Activated B cell treated with CpG ODN at 0.5 μM for 24 hours (primary cell): ENCODE measurements at regions of chr6 and their contacts with region 1.

Region 1: DNA sequence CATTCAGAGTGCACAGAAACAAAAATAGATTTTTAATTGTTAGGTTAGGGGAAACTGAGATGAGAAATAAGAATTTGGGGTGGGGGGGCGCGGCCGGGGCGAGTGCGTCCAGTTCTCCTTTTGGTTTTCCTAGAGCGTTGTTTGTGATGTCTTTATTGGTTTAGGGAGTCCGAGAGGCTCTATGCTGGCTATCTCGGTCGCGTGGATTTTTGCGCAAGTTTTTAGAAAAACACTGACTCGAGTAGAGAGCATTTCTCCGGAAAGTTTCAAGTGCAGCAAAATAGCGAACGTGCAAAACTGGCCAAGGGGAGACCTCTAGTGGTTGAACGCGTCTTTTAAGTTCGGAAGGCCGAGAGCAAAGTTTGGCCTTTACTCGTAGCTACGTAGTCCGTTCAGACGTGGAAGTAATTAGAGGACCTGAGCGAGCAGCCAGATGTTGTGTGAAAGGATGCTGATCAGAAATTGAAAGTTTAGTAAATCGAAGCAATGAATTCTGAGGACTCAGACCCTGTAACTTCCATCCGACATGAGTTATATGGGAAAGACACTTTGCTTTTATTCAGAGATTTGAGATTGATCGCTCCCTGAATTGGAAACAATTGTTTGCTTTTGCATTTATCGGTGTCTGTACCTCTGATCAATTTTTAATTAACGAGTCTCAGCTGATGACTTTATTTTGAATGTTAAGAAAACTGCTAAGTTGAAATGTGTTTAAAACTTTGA is 2.7 kb downstream of the L3MBTL3 start:
- DNase-seq: peak; percentile 50
- ATAC-seq: peak; percentile 58
- H3K4me3 Mint-ChIP-seq: peak overlapping the region; percentile 97
- H3K27ac Mint-ChIP-seq: peak overlapping the region; percentile 96
- H3K4me1 Mint-ChIP-seq: peaks cover 25% of the 10 kb centered on the region
- H3K27me3 Mint-ChIP-seq: no peaks in the 10 kb centered on the region
- CTCF ChIP-seq: peak; percentile 29

Region 2: GRCh38 chr6:129490521-129491245 is 530.4 kb before region 1 on chr6:
- CTCF ChIA-PET with region 1: no interaction called
- POLR2A ChIA-PET with region 1: interaction called, 3 read pairs
- intact Hi-C with region 1: loop called (anchors 1 kb)
- DNase-seq: no peak
- ATAC-seq: peak; percentile 88
- H3K4me3 Mint-ChIP-seq: peak overlapping the region; percentile 82
- H3K27ac Mint-ChIP-seq: peak overlapping the region; percentile 97
- H3K4me1 Mint-ChIP-seq: peaks cover 28% of the 10 kb centered on the region
- H3K27me3 Mint-ChIP-seq: no peaks in the 10 kb centered on the region
- CTCF ChIP-seq: no peak

Region 3: DNA sequence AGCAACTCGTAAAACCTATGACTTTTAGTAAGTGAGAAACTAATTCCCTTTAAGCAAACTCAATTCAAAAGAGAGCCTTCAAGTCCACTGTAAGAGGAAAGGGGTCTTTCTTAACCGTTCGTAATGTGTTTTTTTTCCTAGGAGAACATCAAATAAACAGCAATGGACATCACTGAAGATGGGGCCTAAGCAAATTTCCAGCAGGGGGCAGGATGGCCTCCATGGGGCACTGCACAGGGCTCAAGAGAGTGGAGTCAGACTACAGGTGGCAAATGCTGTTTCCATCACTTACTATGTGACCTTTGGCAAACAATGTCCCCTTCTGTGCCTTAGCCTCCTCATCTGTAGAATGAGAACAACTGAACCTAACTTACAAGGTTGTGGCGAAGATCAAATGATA is 399.8 kb before region 1 on chr6:
- CTCF ChIA-PET with region 1: no interaction called
- POLR2A ChIA-PET with region 1: no interaction called
- intact Hi-C with region 1: loop called (anchors 1 kb)
- DNase-seq: no peak
- ATAC-seq: peak; percentile 71
- H3K4me3 Mint-ChIP-seq: no peak overlapping the region
- H3K27ac Mint-ChIP-seq: no peak overlapping the region
- H3K4me1 Mint-ChIP-seq: no peaks in the 10 kb centered on the region
- H3K27me3 Mint-ChIP-seq: no peaks in the 10 kb centered on the region
- CTCF ChIP-seq: no peak

Region 4: DNA sequence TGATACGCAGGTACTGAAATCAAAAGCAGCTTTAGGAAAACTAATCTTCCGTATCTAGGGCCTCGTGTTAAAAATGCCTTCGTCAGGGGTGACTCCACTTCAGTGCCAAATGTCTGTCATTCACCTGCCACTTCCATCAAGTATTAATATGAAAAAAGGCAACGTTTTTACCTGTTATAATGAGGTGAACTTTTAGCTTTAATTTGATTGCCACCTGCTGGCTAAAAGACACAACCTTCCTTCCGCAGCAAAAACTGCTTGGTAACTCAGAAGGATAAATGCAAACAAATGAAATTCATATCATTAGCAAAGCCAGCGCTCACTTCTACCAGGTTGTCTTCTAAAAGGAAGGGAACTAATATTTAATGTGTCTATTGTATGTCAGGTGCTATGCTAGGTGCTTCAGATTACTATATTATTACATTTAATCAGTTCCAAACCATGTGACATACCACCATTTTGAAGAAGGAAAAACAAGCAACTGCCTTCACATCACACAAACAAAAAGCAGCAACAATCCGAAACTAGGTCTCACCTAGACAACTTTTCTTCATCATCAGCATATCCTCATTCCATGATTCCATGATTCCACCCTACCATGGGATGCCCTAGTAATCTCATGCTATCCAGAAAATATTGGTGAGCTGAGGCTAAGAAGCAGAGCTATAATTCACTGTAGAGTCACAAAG is 290.4 kb before region 1 on chr6:
- CTCF ChIA-PET with region 1: interaction called, 24 read pairs
- POLR2A ChIA-PET with region 1: interaction called, 3 read pairs
- intact Hi-C with region 1: loop called (anchors 1 kb)
- DNase-seq: no peak
- ATAC-seq: peak; percentile 49
- H3K4me3 Mint-ChIP-seq: no peak overlapping the region
- H3K27ac Mint-ChIP-seq: no peak overlapping the region
- H3K4me1 Mint-ChIP-seq: no peaks in the 10 kb centered on the region
- H3K27me3 Mint-ChIP-seq: no peaks in the 10 kb centered on the region
- CTCF ChIP-seq: peak; percentile 69

Region 5: GRCh38 chr6:129882510-129883023 is 138.5 kb before region 1 on chr6:
- CTCF ChIA-PET with region 1: no interaction called
- POLR2A ChIA-PET with region 1: no interaction called
- intact Hi-C with region 1: loop called (anchors 2 kb)
- DNase-seq: peak; percentile 17
- ATAC-seq: peak; percentile 74
- H3K4me3 Mint-ChIP-seq: peak overlapping the region; percentile 66
- H3K27ac Mint-ChIP-seq: peak overlapping the region; percentile 83
- H3K4me1 Mint-ChIP-seq: peaks cover 27% of the 10 kb centered on the region
- H3K27me3 Mint-ChIP-seq: no peaks in the 10 kb centered on the region
- CTCF ChIP-seq: no peak

Region 6: GRCh38 chr6:129981598-129981997 is 39.5 kb before region 1 on chr6:
- CTCF ChIA-PET with region 1: no interaction called
- POLR2A ChIA-PET with region 1: no interaction called
- intact Hi-C with region 1: loop called (anchors 1 kb)
- DNase-seq: no peak
- ATAC-seq: no peak
- H3K4me3 Mint-ChIP-seq: no peak overlapping the region
- H3K27ac Mint-ChIP-seq: no peak overlapping the region
- H3K4me1 Mint-ChIP-seq: no peaks in the 10 kb centered on the region
- H3K27me3 Mint-ChIP-seq: peaks cover 3% of the 10 kb centered on the region
- CTCF ChIP-seq: no peak

Region 7: GRCh38 chr6:131116749-131117360 is 1095.8 kb after region 1 on chr6:
- CTCF ChIA-PET with region 1: no interaction called
- POLR2A ChIA-PET with region 1: no interaction called
- intact Hi-C with region 1: no loop called
- DNase-seq: no peak
- ATAC-seq: peak; percentile 34
- H3K4me3 Mint-ChIP-seq: no peak overlapping the region
- H3K27ac Mint-ChIP-seq: no peak overlapping the region
- H3K4me1 Mint-ChIP-seq: peaks cover 14% of the 10 kb centered on the region
- H3K27me3 Mint-ChIP-seq: no peaks in the 10 kb centered on the region
- CTCF ChIP-seq: peak; percentile 33